ENCODE measurements at regions of chr6 and their contacts with region 1.

Region 1: DNA sequence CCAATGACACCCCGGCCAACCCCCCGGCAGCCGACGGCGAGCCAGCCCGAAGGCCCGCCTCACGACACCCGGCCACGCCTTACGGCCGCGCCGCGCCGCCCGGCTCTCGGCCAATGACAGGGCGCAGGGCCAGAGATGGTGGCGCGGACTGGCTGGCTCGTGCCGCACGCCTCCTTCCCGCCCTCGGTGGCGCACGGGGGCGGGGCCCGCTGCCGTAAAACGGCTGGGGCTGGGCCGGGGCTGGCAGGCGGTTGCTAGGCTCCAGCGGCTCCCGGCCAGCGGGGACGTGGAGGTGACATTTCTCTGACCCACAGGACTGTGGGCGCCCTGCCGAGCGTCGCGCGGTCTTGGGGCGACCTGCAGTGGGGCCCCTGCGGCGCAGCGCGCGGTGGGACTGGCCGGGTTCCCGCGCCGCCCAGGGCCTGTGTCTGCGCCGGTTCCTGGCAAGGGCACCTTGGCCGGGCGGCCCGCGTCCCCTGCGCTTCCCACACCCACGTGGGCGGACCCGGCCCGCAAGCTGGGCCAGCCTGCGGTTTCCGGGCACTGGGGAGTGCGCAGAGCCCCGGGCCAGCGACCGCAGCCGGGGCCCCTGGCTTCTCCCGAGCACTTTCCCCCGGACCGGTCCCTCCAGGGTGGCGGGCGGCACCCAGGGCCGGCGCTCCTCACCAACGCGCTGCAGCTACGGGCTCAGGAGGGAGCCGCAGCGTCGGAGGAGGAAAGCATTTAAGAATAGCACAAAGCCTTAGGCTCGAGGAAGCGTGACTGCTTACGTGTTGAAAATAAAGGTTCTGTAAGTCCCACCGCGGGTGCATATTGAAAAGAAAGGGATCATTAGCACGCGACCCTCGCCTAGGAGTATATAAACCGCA is at the start of gene MPC1:
- DNase-seq: peak; percentile 94
- H3K4me3 Mint-ChIP-seq: peak within 1 kb of the TSS; percentile 85
- H3K27ac Mint-ChIP-seq: peak within 1 kb of the TSS; percentile 50
- H3K4me1 Mint-ChIP-seq: peaks cover 5% of the 10 kb centered on the region
- H3K27me3 Mint-ChIP-seq: no peaks in the 10 kb centered on the region
- total RNA-seq, gene MPC1: 16.6 to 18.7 TPM

Region 2: DNA sequence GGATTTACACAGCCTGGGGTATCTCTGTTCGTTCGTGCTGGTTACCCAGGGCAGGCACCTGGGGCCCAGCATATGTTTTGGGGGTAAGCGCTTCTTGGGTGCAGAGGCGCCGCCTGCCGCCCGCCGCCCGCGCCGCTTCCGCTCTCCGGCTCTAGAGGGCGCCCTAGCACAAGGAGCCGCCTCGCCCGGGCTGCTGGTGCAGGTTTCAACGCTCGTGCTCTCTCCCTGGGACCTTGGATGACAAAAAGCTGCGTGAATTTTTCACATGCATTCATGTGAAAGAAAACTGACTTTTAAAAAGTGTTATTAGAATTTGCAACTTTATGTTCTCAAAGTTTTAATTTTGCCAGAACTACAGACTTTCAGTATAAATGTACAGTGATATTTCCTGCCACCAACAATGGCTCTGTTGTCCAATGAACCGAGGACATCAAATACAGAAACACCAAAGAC is 107.4 kb before region 1 on chr6:
- CTCF ChIA-PET with region 1: interaction called, 8 read pairs
- intact Hi-C with region 1: loop called (anchors 1 kb)
- DNase-seq: peak; percentile 78
- H3K4me3 Mint-ChIP-seq: no peak overlapping the region
- H3K27ac Mint-ChIP-seq: no peak overlapping the region
- H3K4me1 Mint-ChIP-seq: peaks cover 3% of the 10 kb centered on the region
- H3K27me3 Mint-ChIP-seq: no peaks in the 10 kb centered on the region

Region 3: GRCh38 chr6:166342349-166343149 is 40.6 kb before region 1 on chr6 and contains the start of gene SFT2D1:
- CTCF ChIA-PET with region 1: interaction called, 12 read pairs
- intact Hi-C with region 1: loop called (anchors 1 kb)
- DNase-seq: peak; percentile 74
- H3K4me3 Mint-ChIP-seq: peak within 1 kb of the TSS; percentile 83
- H3K27ac Mint-ChIP-seq: peak within 1 kb of the TSS; percentile 78
- H3K4me1 Mint-ChIP-seq: peaks cover 8% of the 10 kb centered on the region
- H3K27me3 Mint-ChIP-seq: no peaks in the 10 kb centered on the region
- total RNA-seq, gene SFT2D1: 53.1 to 53.3 TPM

Region 4: DNA sequence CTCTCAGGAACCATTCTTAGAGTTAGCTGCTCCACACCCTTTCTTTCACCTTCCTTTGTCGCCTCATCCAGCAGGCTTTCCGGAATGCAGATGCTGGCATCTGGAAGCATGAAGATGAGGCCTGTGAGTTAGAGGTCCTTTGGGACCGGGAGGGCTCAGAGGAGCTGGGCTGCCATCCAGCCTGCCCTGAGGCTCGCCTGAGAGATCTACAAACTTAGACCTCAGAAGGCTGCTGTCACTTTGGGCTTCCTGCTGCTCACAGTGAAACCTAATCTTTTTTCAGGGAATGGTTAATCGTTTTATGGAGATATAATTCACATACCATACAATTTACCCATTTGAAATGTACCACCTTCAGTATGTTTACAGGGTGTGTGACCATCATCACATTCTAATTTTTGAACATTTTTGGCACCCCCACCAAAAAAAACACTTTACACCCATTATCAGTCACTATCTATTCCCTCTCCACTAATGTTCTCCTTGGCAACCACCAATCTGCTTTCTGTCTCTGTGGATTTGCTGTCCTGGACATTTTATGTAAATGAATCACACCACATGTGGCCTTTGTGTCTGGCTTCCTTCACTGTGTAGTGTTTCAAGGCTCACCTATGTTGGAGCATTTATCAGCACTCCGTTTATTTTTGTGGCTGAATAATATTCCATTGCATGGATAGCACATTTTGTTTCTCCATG is 19.6 kb after region 1 on chr6:
- CTCF ChIA-PET with region 1: interaction called, 16 read pairs
- intact Hi-C with region 1: no loop called
- DNase-seq: no peak
- H3K4me3 Mint-ChIP-seq: no peak overlapping the region
- H3K27ac Mint-ChIP-seq: no peak overlapping the region
- H3K4me1 Mint-ChIP-seq: no peaks in the 10 kb centered on the region
- H3K27me3 Mint-ChIP-seq: no peaks in the 10 kb centered on the region

Region 5: DNA sequence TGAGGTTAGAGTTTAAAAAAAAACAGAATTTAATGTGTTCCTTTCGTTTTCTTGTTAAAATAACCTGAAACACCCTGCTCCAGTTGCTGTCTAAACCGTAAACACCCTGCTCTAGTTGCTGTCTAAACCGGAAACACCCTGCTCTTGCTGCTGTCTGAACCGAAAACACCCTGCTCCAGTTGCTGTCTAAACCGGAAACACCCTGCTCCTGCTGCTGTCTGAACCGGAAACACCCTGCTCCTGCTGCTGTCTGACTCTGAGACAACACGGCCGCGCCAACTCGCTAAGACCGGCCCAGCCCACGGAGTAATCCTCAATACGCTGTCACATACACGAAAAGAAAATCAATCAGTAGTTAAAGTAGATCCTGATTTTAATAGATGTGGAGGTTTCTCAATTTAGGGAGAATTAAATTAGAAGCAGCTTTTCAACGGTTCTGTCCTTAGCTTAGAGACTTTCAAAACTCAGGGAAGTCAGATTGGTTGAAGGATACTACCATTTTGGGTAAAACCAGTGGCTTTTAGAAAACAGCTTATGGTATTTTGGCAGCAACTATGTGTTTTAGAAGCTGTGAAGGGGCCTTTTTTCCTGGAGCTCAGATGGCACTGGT is 105.0 kb after region 1 on chr6:
- CTCF ChIA-PET with region 1: no interaction called
- intact Hi-C with region 1: loop called (anchors 1 kb)
- DNase-seq: peak; percentile 84
- H3K4me3 Mint-ChIP-seq: peak overlapping the region; percentile 76
- H3K27ac Mint-ChIP-seq: peak overlapping the region; percentile 97
- H3K4me1 Mint-ChIP-seq: peaks cover 20% of the 10 kb centered on the region
- H3K27me3 Mint-ChIP-seq: no peaks in the 10 kb centered on the region

Region 6: GRCh38 chr6:166586424-166587156 is 203.4 kb after region 1 on chr6 and contains the start of gene RAMACL:
- CTCF ChIA-PET with region 1: no interaction called
- intact Hi-C with region 1: no loop called
- DNase-seq: peak; percentile 59
- H3K4me3 Mint-ChIP-seq: no peak within 1 kb of the TSS
- H3K27ac Mint-ChIP-seq: no peak within 1 kb of the TSS
- H3K4me1 Mint-ChIP-seq: peaks cover 23% of the 10 kb centered on the region
- H3K27me3 Mint-ChIP-seq: no peaks in the 10 kb centered on the region
- total RNA-seq, gene RAMACL: 0.52 to 0.89 TPM

Region 7: GRCh38 chr6:166999145-166999883 is 616.1 kb after region 1 on chr6 and contains the start of gene CEP43:
- CTCF ChIA-PET with region 1: no interaction called
- intact Hi-C with region 1: loop called (anchors 2 kb)
- DNase-seq: peak; percentile 82
- H3K4me3 Mint-ChIP-seq: peak within 1 kb of the TSS; percentile 86
- H3K27ac Mint-ChIP-seq: peak within 1 kb of the TSS; percentile 74
- H3K4me1 Mint-ChIP-seq: peaks cover 26% of the 10 kb centered on the region
- H3K27me3 Mint-ChIP-seq: no peaks in the 10 kb centered on the region
- total RNA-seq, gene CEP43: 19.6 to 20.3 TPM